ENCODE measurements at regions of chr4 and their contacts with region 1.

Region 1: DNA sequence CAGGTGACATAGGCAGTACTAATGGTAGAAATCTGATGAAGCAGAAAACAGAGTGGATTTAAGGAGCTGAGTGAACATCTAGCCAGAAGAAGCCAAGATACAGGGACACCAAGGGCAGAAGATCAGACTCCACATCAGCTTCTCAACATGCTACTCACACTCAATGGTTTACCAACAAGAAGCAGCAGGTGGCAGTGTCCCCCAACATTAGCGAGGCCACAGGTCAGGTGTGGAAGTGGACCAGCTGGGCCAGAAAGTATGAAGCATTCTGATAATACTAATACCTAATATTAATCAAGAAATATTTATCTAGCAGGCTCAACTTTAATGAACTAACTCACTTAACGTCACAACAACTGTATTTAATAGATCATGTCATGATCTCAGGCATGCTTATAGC is 73.4 kb upstream of the TTC29 start:
- DNase-seq: peak; percentile 12 to 53
- ATAC-seq: peak; percentile 94 to 95
- H3K4me3 ChIP-seq: no peak overlapping the region
- H3K27ac ChIP-seq: no peak overlapping the region
- H3K4me1 ChIP-seq: no peaks in the 10 kb centered on the region
- CTCF ChIP-seq: peak; percentile 63
- EP300 ChIP-seq: no peak
- POLR2A ChIP-seq: no peak
- RAD21 ChIP-seq: peak; percentile 72 to 84

Region 2: DNA sequence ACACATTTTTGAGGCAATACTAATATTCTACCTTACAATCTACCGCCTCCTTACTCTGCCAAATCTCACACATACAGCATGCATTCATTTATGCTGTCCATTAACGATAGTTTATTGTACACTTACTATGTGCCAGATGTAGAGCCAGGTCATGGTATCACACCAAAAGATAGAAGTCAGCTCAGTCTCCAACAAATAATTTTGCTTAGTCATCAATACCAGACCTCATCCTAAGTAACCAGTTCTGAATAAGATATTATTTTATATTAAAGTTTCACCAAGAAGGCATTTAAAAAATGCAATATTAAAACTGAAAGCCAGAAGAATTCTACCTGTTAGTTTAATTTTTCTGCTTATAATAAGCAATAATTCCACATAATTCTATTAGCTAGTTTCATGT is 12.8 kb before region 1 on chr4:
- CTCF ChIA-PET with region 1: interaction called, 12 read pairs
- POLR2A ChIA-PET with region 1: no interaction called
- DNase-seq: no peak
- ATAC-seq: no peak
- H3K4me3 ChIP-seq: no peak overlapping the region
- H3K27ac ChIP-seq: no peak overlapping the region
- H3K4me1 ChIP-seq: no peaks in the 10 kb centered on the region
- CTCF ChIP-seq: no peak
- EP300 ChIP-seq: no peak
- POLR2A ChIP-seq: no peak
- RAD21 ChIP-seq: no peak

Region 3: GRCh38 chr4:147090486-147090885 is 71.4 kb after region 1 on chr4:
- CTCF ChIA-PET with region 1: interaction called, 10 read pairs
- POLR2A ChIA-PET with region 1: no interaction called
- DNase-seq: no peak
- ATAC-seq: no peak
- H3K4me3 ChIP-seq: no peak overlapping the region
- H3K27ac ChIP-seq: no peak overlapping the region
- H3K4me1 ChIP-seq: no peaks in the 10 kb centered on the region; the same call in 2 of the 3 replicates
- CTCF ChIP-seq: no peak
- EP300 ChIP-seq: no peak
- POLR2A ChIP-seq: no peak
- RAD21 ChIP-seq: no peak

Region 4: GRCh38 chr4:147096667-147097604 is 77.9 kb after region 1 on chr4:
- CTCF ChIA-PET with region 1: interaction called, 28 read pairs
- POLR2A ChIA-PET with region 1: interaction called, 5 read pairs
- DNase-seq: peak; percentile 13 to 44
- ATAC-seq: peak in 1 of 2 experiments; percentile 66; a peak in 3 of 6 replicates
- H3K4me3 ChIP-seq: no peak overlapping the region
- H3K27ac ChIP-seq: no peak overlapping the region
- H3K4me1 ChIP-seq: no peaks in the 10 kb centered on the region; the same call in 2 of the 3 replicates
- CTCF ChIP-seq: peak; percentile 64
- EP300 ChIP-seq: no peak
- POLR2A ChIP-seq: no peak
- RAD21 ChIP-seq: peak; percentile 68 to 71

Region 5: DNA sequence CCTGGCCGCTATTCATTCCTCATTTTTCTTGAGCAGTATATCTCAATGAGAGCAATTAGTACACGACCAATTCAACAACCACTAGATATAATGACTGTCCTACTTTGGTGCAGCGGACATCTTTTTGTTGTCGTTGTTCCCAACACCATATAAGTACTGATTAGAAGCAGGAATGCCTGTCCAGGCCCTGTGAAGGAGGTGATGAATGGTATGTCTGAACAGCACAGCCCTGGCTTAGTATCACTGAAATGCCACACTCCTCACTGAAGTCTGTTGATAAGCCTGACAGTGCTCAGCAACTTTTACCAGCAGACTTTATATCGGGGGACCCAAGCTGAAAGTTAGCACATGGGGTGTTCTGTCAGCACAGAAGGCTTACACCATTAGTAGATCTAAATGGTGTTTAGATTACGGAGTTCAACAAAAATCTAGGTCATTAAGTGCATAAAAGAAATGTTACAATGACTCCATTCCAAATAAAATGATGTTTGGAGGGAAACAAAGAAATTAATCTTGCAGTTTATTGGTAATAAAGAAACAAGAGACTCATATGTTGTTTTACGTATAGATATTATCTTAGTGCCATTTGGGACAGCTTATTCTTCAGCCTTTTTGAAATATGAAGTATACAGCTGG is 154.9 kb after region 1 on chr4:
- CTCF ChIA-PET with region 1: no interaction called
- POLR2A ChIA-PET with region 1: no interaction called
- DNase-seq: no peak
- ATAC-seq: no peak
- H3K4me3 ChIP-seq: no peak overlapping the region
- H3K27ac ChIP-seq: no peak overlapping the region
- H3K4me1 ChIP-seq: no peaks in the 10 kb centered on the region
- CTCF ChIP-seq: no peak
- EP300 ChIP-seq: no peak
- POLR2A ChIP-seq: no peak
- RAD21 ChIP-seq: no peak

Measured in A549 (cell line).